ENCODE measurements at regions of chr18 and their contacts with region 1.

Region 1: DNA sequence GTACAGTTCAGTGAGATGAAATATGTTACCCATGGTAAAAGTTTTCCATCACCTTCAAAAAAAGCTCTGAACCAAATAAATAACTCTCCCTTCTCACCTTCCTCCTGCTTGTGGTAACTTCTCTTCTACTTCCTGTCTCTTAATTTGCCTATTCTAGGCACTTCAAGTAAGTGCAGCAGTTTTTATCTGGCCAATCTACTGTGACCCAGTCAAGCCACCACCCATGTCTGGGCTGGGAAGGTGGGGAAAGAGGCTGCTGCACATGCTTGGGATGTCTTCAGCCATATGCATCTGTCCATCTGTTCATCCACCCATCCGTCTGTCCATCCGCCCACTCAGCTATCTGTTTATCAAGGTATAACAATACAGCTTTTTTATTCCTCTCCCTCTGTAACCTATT is 31.6 kb downstream of the ZNF532 start:
- DNase-seq: no peak
- H3K4me3 ChIP-seq: no peak overlapping the region
- H3K27ac ChIP-seq: no peak overlapping the region
- H3K4me1 ChIP-seq: peaks cover 0 to 24% (median 7%) of the 10 kb centered on the region in 4 experiments; a peak in 6 of 7 replicates
- H3K27me3 ChIP-seq: no peaks in the 10 kb centered on the region
- CTCF ChIP-seq: no peak
- EP300 ChIP-seq: no peak
- POLR2A ChIP-seq: no peak
- RAD21 ChIP-seq: no peak

Region 2: DNA sequence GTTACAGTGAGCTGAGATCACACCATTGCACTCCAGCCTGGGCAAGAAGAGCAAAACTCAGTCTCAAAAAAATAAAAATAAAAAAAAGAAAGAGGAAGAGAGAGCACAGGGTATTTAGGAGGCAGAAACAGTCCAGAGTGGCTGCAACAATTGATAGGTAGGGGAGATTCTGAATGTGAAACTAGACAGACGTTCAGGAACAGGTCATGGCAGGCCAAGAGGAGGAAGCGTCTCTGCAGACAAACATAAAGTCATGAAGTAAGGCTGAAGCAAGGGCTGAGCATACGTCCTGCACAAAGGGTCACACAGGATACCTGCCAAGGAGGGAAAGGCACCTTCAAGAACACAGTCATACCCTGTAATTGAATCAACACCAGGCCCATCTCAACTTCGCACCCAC is 95.7 kb before region 1 on chr18:
- CTCF ChIA-PET with region 1: no interaction called
- POLR2A ChIA-PET with region 1: no interaction called
- DNase-seq: no peak
- H3K4me3 ChIP-seq: no peak overlapping the region
- H3K27ac ChIP-seq: no peak overlapping the region
- H3K4me1 ChIP-seq: peaks cover 0 to 3% (median 2%) of the 10 kb centered on the region in 4 experiments; a peak in 6 of 7 replicates
- H3K27me3 ChIP-seq: no peaks in the 10 kb centered on the region
- CTCF ChIP-seq: no peak
- EP300 ChIP-seq: no peak
- POLR2A ChIP-seq: no peak
- RAD21 ChIP-seq: no peak

Region 3: GRCh38 chr18:58819051-58819450 is 77.2 kb before region 1 on chr18:
- CTCF ChIA-PET with region 1: no interaction called
- POLR2A ChIA-PET with region 1: no interaction called
- DNase-seq: no peak
- H3K4me3 ChIP-seq: no peak overlapping the region
- H3K27ac ChIP-seq: no peak overlapping the region
- H3K4me1 ChIP-seq: peaks cover 0 to 5% (median 4%) of the 10 kb centered on the region in 4 experiments; a peak in 2 of 7 replicates
- H3K27me3 ChIP-seq: no peaks in the 10 kb centered on the region
- CTCF ChIP-seq: no peak
- EP300 ChIP-seq: no peak
- POLR2A ChIP-seq: no peak
- RAD21 ChIP-seq: no peak

Region 4: GRCh38 chr18:58870130-58870529 is 26.1 kb before region 1 on chr18:
- CTCF ChIA-PET with region 1: no interaction called
- POLR2A ChIA-PET with region 1: interaction called, 622 read pairs
- DNase-seq: no peak
- H3K4me3 ChIP-seq: no peak overlapping the region
- H3K27ac ChIP-seq: peak overlapping the region; percentile 43; the same call in 1 of the 2 replicates
- H3K4me1 ChIP-seq: peaks cover 18 to 37% (median 30%) of the 10 kb centered on the region in 4 experiments
- H3K27me3 ChIP-seq: no peaks in the 10 kb centered on the region
- CTCF ChIP-seq: no peak
- EP300 ChIP-seq: no peak
- POLR2A ChIP-seq: no peak
- RAD21 ChIP-seq: no peak

Region 5: DNA sequence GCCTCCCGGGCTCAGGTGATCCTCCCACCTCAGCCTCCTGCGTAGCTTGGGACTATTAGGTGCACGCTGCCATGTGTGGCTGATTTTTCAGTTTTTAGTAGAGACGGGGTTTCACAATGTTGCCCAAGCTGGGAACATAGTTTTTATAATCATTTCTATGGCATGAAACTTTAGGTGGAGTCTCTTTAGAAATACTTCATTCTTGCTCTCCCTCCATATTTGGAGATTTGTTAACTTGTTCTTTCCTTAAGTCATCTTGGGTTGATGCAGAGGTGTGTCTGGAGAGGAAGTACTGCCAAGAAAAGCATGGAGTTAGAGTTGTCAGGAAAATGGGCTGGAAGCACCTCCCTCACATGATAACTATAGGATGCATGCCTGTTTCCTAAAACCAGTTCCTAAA is 14.2 kb before region 1 on chr18:
- CTCF ChIA-PET with region 1: interaction called, 3 read pairs
- POLR2A ChIA-PET with region 1: interaction called, 622 read pairs
- DNase-seq: no peak
- H3K4me3 ChIP-seq: no peak overlapping the region
- H3K27ac ChIP-seq: no peak overlapping the region
- H3K4me1 ChIP-seq: peaks cover 0 to 8% (median 1%) of the 10 kb centered on the region in 4 experiments; a peak in 2 of 7 replicates
- H3K27me3 ChIP-seq: no peaks in the 10 kb centered on the region
- CTCF ChIP-seq: no peak
- EP300 ChIP-seq: no peak
- POLR2A ChIP-seq: no peak
- RAD21 ChIP-seq: no peak

Region 6: DNA sequence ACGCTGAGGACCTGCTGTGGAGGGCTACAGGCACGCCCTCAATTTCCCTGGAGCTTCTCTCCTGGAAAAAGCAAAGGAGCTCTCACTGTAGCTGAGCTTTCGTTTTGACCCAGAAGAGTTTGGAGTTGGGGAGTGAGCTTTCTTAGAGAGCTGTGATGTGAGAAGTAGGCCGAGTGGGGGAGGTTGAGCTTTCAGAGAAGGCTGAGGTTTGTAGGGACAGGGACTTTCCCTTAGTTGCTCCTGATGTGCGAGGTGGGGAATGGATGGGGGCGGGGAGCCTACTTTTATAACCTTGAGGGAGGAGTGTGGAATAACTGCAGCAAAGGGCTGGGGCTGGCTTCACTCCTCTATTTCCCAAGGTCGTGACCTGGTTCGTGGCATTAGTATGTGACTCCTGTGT is 15.5 kb after region 1 on chr18:
- CTCF ChIA-PET with region 1: interaction called, 8 read pairs
- POLR2A ChIA-PET with region 1: interaction called, 29 read pairs
- DNase-seq: peak in 1 of 2 experiments; percentile 46
- H3K4me3 ChIP-seq: peak overlapping the region in 1 of 4 experiments; percentile 16; a peak in 1 of 8 replicates
- H3K27ac ChIP-seq: peak overlapping the region; percentile 53; the same call in 1 of the 2 replicates
- H3K4me1 ChIP-seq: peaks cover 7 to 42% (median 40%) of the 10 kb centered on the region in 4 experiments
- H3K27me3 ChIP-seq: no peaks in the 10 kb centered on the region
- CTCF ChIP-seq: no peak
- EP300 ChIP-seq: no peak
- POLR2A ChIP-seq: no peak
- RAD21 ChIP-seq: no peak

Region 7: DNA sequence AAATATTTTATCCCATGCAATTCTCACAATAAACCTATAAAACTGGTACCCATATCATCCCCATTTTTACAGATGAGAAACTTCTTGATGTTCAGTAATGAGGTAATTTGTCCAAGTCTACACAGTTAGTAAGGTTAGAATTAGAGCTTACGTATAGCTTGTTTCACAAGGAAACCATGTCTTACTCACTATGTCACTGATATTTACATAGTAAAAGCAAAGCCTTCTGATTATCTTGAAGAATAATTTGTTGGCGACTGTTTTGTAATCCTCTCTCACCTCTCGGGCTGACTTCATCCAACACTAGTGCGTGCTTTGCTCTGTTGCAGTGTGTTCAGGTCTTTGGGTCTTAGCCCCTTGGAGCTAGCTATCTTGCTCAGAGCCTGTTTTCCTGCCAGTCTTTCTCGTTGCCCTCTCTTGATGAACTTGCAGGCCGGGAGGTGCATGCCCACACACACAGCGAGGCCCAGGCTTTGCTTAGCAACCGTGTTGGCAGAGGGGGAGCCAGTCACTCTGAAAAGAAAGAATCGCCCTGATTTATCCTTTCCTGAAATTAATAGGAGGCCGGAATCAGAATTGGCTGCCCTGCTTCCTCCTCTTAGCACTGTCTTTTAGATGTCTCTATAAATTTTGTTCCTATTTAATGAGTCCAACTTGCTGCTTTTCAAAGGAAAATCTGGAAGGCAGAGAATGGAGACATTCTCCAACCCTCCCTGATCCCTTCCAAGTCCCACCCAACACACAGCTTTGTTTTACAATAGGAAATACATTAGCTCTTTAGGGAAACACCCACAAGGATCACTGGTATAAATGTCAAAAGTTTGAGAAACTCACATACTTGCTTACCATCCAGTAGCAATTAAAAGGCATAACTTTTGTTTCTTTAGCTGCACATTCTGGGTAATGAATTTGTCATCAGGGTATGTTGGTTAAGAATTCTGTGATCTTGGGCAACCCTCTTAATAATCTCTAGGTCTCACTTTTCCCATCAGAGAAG is 145.8 kb after region 1 on chr18:
- CTCF ChIA-PET with region 1: no interaction called
- POLR2A ChIA-PET with region 1: no interaction called
- DNase-seq: no peak
- H3K4me3 ChIP-seq: no peak overlapping the region
- H3K27ac ChIP-seq: no peak overlapping the region
- H3K4me1 ChIP-seq: no peaks in the 10 kb centered on the region
- H3K27me3 ChIP-seq: no peaks in the 10 kb centered on the region
- CTCF ChIP-seq: no peak
- EP300 ChIP-seq: no peak
- POLR2A ChIP-seq: no peak
- RAD21 ChIP-seq: no peak